ENCODE measurements at regions of chr5 and their contacts with region 1.

Region 1: GRCh38 chr5:174418928-174419796 is 305.2 kb upstream of the MSX2 start:
- DNase-seq: peak; percentile 87
- H3K4me3 ChIP-seq: peak overlapping the region; percentile 31
- H3K27ac ChIP-seq: no peak overlapping the region
- H3K4me1 ChIP-seq: peaks cover 7% of the 10 kb centered on the region
- H3K27me3 ChIP-seq: peaks cover 71% of the 10 kb centered on the region
- CTCF ChIP-seq: peak; percentile 91

Region 2: DNA sequence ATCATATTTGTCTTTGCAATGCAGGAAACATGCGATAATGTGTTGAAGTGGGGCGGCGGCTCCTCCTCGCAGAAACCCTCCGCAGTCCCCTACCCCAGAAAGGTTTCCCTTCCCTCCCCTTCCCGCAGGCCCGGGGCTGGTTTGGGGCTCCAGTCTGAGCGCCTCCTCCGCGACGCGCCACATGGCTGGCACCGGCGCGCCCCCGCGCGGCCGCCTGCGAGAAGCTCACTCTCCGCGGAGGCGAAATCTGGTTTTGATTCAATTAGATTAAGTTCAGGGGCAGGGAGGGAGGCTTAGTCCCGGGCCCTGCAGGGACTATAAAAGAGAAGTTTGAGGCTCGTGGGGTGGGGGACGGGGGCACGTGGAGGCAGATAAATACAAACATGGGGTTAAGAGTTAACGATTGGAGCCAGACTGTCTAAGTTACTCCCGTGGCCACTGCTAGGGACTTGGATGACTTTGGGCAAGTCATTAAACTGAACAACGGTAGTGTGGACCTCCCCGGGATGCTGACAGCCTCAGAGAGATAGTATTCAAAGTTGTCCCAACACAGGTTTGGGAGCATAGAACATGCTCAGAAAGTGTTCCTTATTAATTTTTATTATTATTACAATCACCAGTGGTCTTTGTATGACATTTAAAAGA is 374.6 kb after region 1 on chr5:
- intact Hi-C with region 1: loop called (anchors 10 kb)
- DNase-seq: peak; percentile 47
- H3K4me3 ChIP-seq: no peak overlapping the region
- H3K27ac ChIP-seq: no peak overlapping the region
- H3K4me1 ChIP-seq: peaks cover 7% of the 10 kb centered on the region
- H3K27me3 ChIP-seq: peaks cover 80% of the 10 kb centered on the region
- CTCF ChIP-seq: peak; percentile 79

Measured in left ventricle myocardium inferior (tissue), 1 donor.